ENCODE measurements at regions of chr17 and their contacts with region 1.

Region 1: GRCh38 chr17:74779948-74780400 is 3.8 kb upstream of the NAT9 start:
- DNase-seq: peak; percentile 97 to 98 (median 97)
- H3K4me3 ChIP-seq: peak overlapping the region in 1 of 3 experiments; percentile 91
- H3K4me3 Mint-ChIP-seq: peak overlapping the region; percentile 87 to 95
- H3K27ac ChIP-seq: peak overlapping the region; percentile 90 to 99
- H3K27ac Mint-ChIP-seq: peak overlapping the region; percentile 99 to 100 (median 100)
- H3K4me1 ChIP-seq: peaks cover 94 to 95% of the 10 kb centered on the region in 2 donors
- H3K4me1 Mint-ChIP-seq: peaks cover 91% of the 10 kb centered on the region
- H3K27me3 ChIP-seq: no peaks in the 10 kb centered on the region
- H3K27me3 Mint-ChIP-seq: peaks cover 0 to 4% (median 2%) of the 10 kb centered on the region in 3 donors
- CTCF ChIP-seq: no peak

Region 2: GRCh38 chr17:74748529-74749365 is 31.2 kb before region 1 on chr17 and contains the start of gene NHERF1:
- intact Hi-C with region 1: loop called (anchors 2 kb)
- DNase-seq: peak; percentile 89 to 91 (median 90)
- H3K4me3 ChIP-seq: peak within 1 kb of the TSS; percentile 91 to 98 (median 97)
- H3K4me3 Mint-ChIP-seq: peak within 1 kb of the TSS; percentile 99 to 100
- H3K27ac ChIP-seq: peak within 1 kb of the TSS; percentile 18 to 87
- H3K27ac Mint-ChIP-seq: peak within 1 kb of the TSS; percentile 80 to 94 (median 86)
- H3K4me1 ChIP-seq: peaks cover 70 to 86% of the 10 kb centered on the region in 2 donors
- H3K4me1 Mint-ChIP-seq: peaks cover 73% of the 10 kb centered on the region
- H3K27me3 ChIP-seq: no peaks in the 10 kb centered on the region
- H3K27me3 Mint-ChIP-seq: no peaks in the 10 kb centered on the region
- CTCF ChIP-seq: no peak
- polyA plus RNA-seq, gene NHERF1: 79.5 to 149 (median 131) TPM

Region 3: DNA sequence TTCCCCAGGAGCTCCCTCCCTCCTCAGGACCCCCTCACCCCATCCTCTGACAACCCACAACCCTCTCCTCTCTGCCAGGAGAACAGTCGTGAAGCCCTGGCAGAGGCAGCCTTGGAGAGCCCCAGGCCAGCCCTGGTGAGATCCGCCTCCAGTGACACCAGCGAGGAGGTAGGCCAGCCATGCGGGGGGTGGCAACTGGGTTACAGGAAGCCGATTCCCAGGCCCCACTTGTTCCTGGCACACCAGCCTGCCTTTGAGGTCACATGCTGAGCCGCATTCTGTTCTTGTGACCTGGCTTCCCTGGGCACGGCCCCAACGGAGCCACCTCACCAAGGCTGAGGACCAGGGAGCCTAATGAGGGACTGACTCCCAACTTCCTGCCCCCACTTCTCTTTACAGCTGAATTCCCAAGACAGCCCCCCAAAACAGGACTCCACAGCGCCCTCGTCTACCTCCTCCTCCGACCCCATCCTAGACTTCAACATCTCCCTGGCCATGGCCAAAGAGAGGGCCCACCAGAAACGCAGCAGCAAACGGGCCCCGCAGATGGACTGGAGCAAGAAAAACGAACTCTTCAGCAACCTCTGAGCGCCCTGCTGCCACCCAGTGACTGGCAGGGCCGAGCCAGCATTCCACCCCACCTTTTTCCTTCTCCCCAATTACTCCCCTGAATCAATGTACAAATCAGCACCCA is 11.8 kb before region 1 on chr17:
- intact Hi-C with region 1: no loop called
- DNase-seq: no peak
- H3K4me3 ChIP-seq: no peak overlapping the region
- H3K4me3 Mint-ChIP-seq: no peak overlapping the region
- H3K27ac ChIP-seq: no peak overlapping the region
- H3K27ac Mint-ChIP-seq: peak overlapping the region in 5 of 7 donors; percentile 16 to 78 (median 51)
- H3K4me1 ChIP-seq: peaks cover 0 to 1% of the 10 kb centered on the region in 2 donors
- H3K4me1 Mint-ChIP-seq: peaks cover 12% of the 10 kb centered on the region
- H3K27me3 ChIP-seq: no peaks in the 10 kb centered on the region
- H3K27me3 Mint-ChIP-seq: peaks cover 0 to 2% (median 2%) of the 10 kb centered on the region in 3 donors
- CTCF ChIP-seq: no peak

Region 4: GRCh38 chr17:74815550-74816370 is 35.8 kb after region 1 on chr17:
- intact Hi-C with region 1: no loop called
- DNase-seq: no peak
- H3K4me3 ChIP-seq: no peak overlapping the region
- H3K4me3 Mint-ChIP-seq: no peak overlapping the region
- H3K27ac ChIP-seq: no peak overlapping the region
- H3K27ac Mint-ChIP-seq: peak overlapping the region in 1 of 7 donors; percentile 66
- H3K4me1 ChIP-seq: peaks cover 37 to 39% of the 10 kb centered on the region in 2 donors
- H3K4me1 Mint-ChIP-seq: peaks cover 40% of the 10 kb centered on the region
- H3K27me3 ChIP-seq: no peaks in the 10 kb centered on the region
- H3K27me3 Mint-ChIP-seq: peaks cover 2% of the 10 kb centered on the region in 3 donors
- CTCF ChIP-seq: peak; percentile 31

Measured in CD14-positive monocyte (primary cell).